Activated B cell treated with CpG ODN at 0.5 μM for 24 hours (primary cell): ENCODE measurements at regions of chr11 and their contacts with region 1.

Region 1: DNA sequence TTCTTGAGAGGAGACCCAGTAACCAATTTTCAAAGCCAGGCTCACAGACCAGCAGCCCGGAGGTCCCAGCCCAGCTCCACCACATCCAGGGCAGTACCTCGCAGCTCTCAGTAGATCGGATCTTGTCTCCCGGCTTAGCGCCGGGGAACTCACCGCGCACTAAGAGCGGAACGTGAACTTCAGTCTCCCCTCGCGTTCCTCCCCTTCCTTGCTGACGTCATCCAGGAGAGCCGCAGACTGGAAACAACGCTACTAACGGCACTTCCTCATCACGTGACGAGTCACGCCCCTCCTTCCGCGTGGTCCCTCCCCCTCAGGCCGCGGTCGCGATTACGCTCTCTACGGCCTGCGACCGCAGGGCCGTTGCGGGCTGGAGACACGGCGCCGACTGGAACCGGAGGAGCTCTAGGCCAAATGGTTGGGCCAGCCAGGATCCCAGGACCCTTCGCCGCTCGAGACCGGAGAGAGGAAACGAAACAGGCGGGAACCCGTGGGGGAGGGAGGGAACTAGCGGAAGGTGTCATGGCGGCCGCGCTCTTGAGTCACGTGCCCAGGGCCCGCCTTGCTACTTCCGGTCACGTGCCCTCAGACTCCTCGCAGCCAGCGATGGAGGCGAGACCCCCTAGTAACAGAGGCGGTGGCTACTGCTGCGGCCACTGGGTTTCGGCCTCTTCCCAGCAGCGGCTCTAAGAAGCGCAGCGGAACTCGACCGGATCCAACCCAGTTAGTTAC is at the starts of genes GTF2H1 and HPS5:
- DNase-seq: peak; percentile 93
- ATAC-seq: peak; percentile 87
- H3K4me3 Mint-ChIP-seq: peak within 1 kb of the TSS; percentile 99
- H3K27ac Mint-ChIP-seq: peak within 1 kb of the TSS; percentile 100
- H3K4me1 Mint-ChIP-seq: peaks cover 70% of the 10 kb centered on the region
- H3K27me3 Mint-ChIP-seq: no peaks in the 10 kb centered on the region
- CTCF ChIP-seq: no peak
- total RNA-seq, gene GTF2H1: 60.3 and 71.5 TPM in 2 replicates
- total RNA-seq, gene HPS5: 42.6 and 51.0 TPM in 2 replicates

Region 2: DNA sequence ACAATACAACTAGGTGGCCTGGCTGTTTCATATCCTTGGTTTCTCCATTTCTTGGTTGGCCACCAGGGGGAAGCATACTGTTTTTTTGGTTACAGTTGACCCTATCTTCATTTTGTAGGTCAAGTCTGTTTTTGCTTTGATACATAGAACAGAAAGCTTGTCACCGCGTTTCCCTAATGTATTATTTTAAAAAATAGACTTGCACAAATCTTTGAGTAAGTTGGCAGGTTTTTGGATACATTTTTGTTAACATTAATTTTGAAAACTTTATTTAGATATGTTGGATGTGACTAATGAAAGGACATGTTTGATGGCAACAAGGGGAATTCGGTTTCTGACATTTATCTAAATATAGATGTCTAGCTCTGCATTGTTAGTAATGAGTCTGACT is 967.5 kb before region 1 on chr11:
- CTCF ChIA-PET with region 1: no interaction called
- POLR2A ChIA-PET with region 1: no interaction called
- intact Hi-C with region 1: loop called (anchors 5 kb)
- DNase-seq: no peak
- ATAC-seq: no peak
- H3K4me3 Mint-ChIP-seq: peak overlapping the region; percentile 87
- H3K27ac Mint-ChIP-seq: no peak overlapping the region
- H3K4me1 Mint-ChIP-seq: peaks cover 32% of the 10 kb centered on the region
- H3K27me3 Mint-ChIP-seq: peaks cover 32% of the 10 kb centered on the region
- CTCF ChIP-seq: peak; percentile 45

Region 3: GRCh38 chr11:18229501-18229900 is 92.6 kb before region 1 on chr11:
- CTCF ChIA-PET with region 1: no interaction called
- POLR2A ChIA-PET with region 1: interaction called, 14 read pairs
- intact Hi-C with region 1: no loop called
- DNase-seq: no peak
- ATAC-seq: peak; percentile 96
- H3K4me3 Mint-ChIP-seq: no peak overlapping the region
- H3K27ac Mint-ChIP-seq: peak overlapping the region; percentile 51
- H3K4me1 Mint-ChIP-seq: peaks cover 22% of the 10 kb centered on the region
- H3K27me3 Mint-ChIP-seq: no peaks in the 10 kb centered on the region
- CTCF ChIP-seq: no peak

Region 4: DNA sequence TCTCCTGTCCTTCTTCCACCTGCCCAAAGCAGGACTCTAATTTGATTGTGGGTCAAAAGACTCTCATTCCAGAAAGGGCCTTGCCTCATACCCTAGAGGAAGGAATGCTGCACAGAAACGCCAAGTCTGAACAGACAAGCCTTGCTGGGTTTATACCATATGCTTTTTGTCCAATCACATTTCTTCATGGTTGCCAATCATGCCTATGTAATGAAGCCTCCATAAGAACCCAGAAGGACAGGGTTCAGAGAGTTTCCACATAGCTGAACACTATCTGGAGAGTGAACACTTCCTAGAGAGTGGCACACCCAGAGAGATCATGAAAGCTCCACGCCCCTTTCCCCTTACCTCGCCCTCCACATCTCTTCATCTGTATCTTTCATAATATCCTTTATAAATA is 68.9 kb before region 1 on chr11:
- CTCF ChIA-PET with region 1: no interaction called
- POLR2A ChIA-PET with region 1: no interaction called
- intact Hi-C with region 1: no loop called
- DNase-seq: no peak
- ATAC-seq: no peak
- H3K4me3 Mint-ChIP-seq: no peak overlapping the region
- H3K27ac Mint-ChIP-seq: no peak overlapping the region
- H3K4me1 Mint-ChIP-seq: no peaks in the 10 kb centered on the region
- H3K27me3 Mint-ChIP-seq: no peaks in the 10 kb centered on the region
- CTCF ChIP-seq: no peak

Region 5: DNA sequence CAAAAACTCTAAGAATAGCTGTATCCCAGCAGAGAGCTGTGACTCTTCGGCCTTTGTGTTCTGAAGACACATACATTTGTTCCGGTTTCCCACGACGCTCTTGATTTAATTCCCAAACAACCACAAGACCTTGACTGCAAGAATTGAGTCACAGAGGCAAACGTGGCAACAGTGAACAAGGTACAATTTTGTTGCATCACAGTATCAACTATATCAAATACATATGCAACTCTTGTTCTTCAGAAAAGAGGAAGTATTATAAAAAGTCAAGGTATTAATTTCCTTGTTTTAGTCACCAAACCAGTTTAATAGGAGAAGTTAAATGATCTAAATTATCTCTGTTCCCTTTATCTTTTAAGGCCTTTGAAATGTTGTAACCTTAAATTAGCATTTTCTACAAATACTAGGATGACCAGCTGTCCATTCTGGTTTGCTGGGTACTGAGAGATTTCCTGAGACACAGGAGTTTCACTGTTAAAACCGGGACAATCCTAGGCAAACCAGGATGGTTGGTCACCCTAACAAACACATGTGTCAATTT is 11.3 kb before region 1 on chr11:
- CTCF ChIA-PET with region 1: no interaction called
- POLR2A ChIA-PET with region 1: interaction called, 47 read pairs
- intact Hi-C with region 1: loop called (anchors 1 kb)
- DNase-seq: no peak
- ATAC-seq: peak; percentile 83
- H3K4me3 Mint-ChIP-seq: peak overlapping the region; percentile 55
- H3K27ac Mint-ChIP-seq: peak overlapping the region; percentile 76
- H3K4me1 Mint-ChIP-seq: peaks cover 38% of the 10 kb centered on the region
- H3K27me3 Mint-ChIP-seq: no peaks in the 10 kb centered on the region
- CTCF ChIP-seq: no peak

Region 6: DNA sequence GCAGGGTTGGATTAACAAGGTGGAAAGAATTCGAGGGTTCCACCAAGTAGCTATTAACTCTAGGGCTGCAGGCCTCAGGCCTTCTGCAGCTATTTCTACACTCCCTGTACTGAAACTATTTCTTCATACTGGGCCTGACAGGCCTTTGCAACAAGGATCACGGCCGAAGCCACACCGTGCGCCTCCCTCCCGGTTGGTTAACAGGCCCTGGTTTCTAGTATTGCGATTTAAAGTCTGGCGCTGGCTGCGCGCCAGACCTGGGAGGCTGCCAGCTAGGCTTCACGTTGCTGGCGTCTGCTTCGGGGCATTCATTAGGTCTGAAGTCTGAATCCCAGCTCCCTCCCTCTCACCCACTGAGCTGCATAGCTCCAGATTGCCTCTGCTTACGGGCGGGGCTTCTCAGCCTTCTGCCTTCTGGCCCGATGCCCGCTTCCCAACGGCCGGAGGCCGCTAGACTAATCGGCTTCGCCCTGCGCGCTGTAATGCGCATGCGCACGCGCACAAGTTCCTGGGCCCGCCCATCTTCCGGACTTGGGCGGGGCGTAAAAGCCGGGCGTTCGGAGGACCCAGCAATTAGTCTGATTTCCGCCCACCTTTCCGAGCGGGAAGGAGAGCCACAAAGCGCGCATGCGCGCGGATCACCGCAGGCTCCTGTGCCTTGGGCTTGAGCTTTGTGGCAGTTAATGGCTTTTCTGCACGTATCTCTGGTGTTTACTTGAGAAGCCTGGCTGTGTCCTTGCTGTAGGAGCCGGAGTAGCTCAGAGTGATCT is 73.8 kb after region 1 on chr11:
- CTCF ChIA-PET with region 1: interaction called, 3 read pairs
- POLR2A ChIA-PET with region 1: interaction called, 69 read pairs
- intact Hi-C with region 1: loop called (anchors 1 kb)
- DNase-seq: peak; percentile 96
- ATAC-seq: peak; percentile 76
- H3K4me3 Mint-ChIP-seq: peak overlapping the region; percentile 96
- H3K27ac Mint-ChIP-seq: peak overlapping the region; percentile 91
- H3K4me1 Mint-ChIP-seq: peaks cover 18% of the 10 kb centered on the region
- H3K27me3 Mint-ChIP-seq: no peaks in the 10 kb centered on the region
- CTCF ChIP-seq: no peak

Region 7: DNA sequence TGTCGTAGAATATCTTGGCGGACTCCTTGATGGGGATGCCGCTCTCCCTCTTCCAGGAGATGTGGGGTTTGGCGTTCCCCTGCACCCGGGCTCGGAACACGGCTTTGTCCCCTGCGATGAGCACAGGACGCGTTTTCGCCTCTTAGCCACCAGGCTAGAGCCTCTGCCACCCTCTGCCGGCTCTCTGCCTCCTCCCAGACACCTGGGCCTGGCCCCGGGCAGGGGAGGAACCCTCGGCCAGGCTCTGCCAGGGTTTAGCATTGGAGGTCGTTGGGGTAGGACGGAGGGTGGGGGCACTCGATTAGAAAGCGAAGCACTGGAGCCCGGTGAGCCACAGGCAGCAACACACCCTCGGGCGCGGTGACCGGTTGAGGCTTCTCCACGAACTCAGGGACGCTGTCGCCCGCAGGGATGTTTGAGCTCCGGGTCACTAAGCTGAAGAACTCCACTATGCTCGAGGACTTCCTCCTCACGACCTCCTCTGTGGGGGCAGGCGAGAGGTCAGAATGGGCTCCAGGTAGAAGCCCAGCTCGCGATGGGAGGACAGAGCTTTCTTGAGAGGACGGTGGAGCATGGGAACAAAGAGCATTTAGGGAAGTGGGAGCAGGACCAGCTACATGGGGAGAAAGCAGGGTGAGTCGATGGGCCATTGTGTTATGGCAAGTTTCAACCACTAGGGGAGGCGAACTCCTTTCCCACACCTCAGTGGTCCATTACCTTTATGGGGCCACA is 399.6 kb after region 1 on chr11:
- CTCF ChIA-PET with region 1: no interaction called
- POLR2A ChIA-PET with region 1: no interaction called
- intact Hi-C with region 1: loop called (anchors 10 kb)
- DNase-seq: peak; percentile 45
- ATAC-seq: peak; percentile 56
- H3K4me3 Mint-ChIP-seq: peak overlapping the region; percentile 92
- H3K27ac Mint-ChIP-seq: peak overlapping the region; percentile 46
- H3K4me1 Mint-ChIP-seq: peaks cover 12% of the 10 kb centered on the region
- H3K27me3 Mint-ChIP-seq: no peaks in the 10 kb centered on the region
- CTCF ChIP-seq: peak; percentile 39